Sigmoid colon (tissue), 7 donors: ENCODE measurements at regions of chr6 and their contacts with region 1.

Region 1: GRCh38 chr6:89829591-89830385 is at the start of gene CASP8AP2:
- DNase-seq: peak; percentile 97
- H3K4me3 ChIP-seq: peak within 1 kb of the TSS; percentile 81 to 89 (median 87)
- H3K27ac ChIP-seq: peak within 1 kb of the TSS; percentile 75 to 89 (median 86)
- H3K4me1 ChIP-seq: peaks cover 0 to 22% (median 16%) of the 10 kb centered on the region in 4 donors
- H3K27me3 ChIP-seq: no peaks in the 10 kb centered on the region
- CTCF ChIP-seq: no peak
- EP300 ChIP-seq: no peak
- POLR2A ChIP-seq: peak; percentile 44 to 62
- total RNA-seq, gene CASP8AP2: 16.4 to 25.8 (median 20.7) TPM

Region 2: GRCh38 chr6:88963139-88964090 is 866.4 kb before region 1 on chr6 and contains the start of gene RNGTT:
- intact Hi-C with region 1: loop called (anchors 5 kb)
- DNase-seq: peak; percentile 99
- H3K4me3 ChIP-seq: peak within 1 kb of the TSS; percentile 87 to 93 (median 90)
- H3K27ac ChIP-seq: peak within 1 kb of the TSS; percentile 87 to 89 (median 87)
- H3K4me1 ChIP-seq: peaks cover 0 to 26% (median 21%) of the 10 kb centered on the region in 4 donors
- H3K27me3 ChIP-seq: no peaks in the 10 kb centered on the region
- CTCF ChIP-seq: no peak
- EP300 ChIP-seq: peak in 1 of 4 donors; percentile 70
- POLR2A ChIP-seq: peak in 1 of 2 donors; percentile 40
- total RNA-seq, gene RNGTT: 10.0 to 14.7 (median 12.9) TPM

Region 3: GRCh38 chr6:89432875-89433251 is 396.9 kb before region 1 on chr6 and contains the start of gene ANKRD6:
- intact Hi-C with region 1: loop called (anchors 10 kb)
- DNase-seq: peak; percentile 83
- H3K4me3 ChIP-seq: peak within 1 kb of the TSS; percentile 90 to 99 (median 92)
- H3K27ac ChIP-seq: peak within 1 kb of the TSS in 2 of 4 donors; percentile 49 to 62
- H3K4me1 ChIP-seq: peaks cover 0 to 27% (median 10%) of the 10 kb centered on the region in 4 donors
- H3K27me3 ChIP-seq: no peaks in the 10 kb centered on the region
- CTCF ChIP-seq: peak; percentile 44 to 85 (median 64)
- EP300 ChIP-seq: no peak
- POLR2A ChIP-seq: no peak
- total RNA-seq, gene ANKRD6: 8.0 to 21.6 (median 17.3) TPM

Region 4: DNA sequence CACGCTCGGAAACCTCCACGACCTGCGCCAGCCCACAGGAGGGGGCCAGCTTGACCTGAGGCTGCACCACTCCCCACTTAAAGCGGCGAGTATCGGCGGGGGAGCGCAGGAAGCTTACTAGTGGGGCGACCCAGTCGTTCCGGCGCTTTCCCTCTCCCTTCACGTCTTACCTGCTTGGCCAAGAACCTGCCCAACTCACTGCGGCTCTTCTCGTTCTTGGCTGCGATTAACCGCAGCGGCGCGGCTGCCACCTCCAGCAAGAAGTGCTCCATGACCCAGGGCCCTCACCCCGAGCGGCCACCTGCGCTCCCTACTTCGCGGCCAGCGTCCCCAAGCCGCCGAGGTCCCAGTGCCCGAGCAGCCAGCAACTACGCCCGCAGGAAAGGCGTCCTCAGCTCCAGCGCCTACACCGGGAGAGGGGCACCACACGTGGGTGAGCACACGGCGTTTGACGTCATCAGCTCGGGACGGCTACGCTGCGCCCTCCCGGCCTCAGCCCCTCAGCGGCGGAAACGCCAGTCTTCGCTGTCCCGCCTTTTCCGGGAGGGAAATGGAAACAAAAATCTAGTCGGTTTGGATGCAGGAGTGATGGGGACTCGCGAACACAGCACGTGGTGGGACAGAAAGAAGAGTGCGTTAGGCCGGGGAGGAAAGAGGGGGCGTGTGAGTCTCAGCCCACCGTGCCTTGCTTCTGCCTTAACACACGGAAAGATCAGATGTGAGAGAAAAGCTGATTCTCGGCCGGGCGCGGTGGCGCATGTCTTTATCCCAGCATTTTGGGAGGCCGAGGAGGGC is 10.3 kb before region 1 on chr6 and contains the start of gene MDN1:
- intact Hi-C with region 1: loop called (anchors 1 kb)
- DNase-seq: peak; percentile 95
- H3K4me3 ChIP-seq: peak within 1 kb of the TSS; percentile 78 to 97 (median 83)
- H3K27ac ChIP-seq: peak within 1 kb of the TSS; percentile 83 to 91 (median 90)
- H3K4me1 ChIP-seq: peaks cover 0 to 22% (median 20%) of the 10 kb centered on the region in 4 donors
- H3K27me3 ChIP-seq: no peaks in the 10 kb centered on the region
- CTCF ChIP-seq: no peak
- EP300 ChIP-seq: peak in 1 of 4 donors; percentile 78
- POLR2A ChIP-seq: peak in 1 of 2 donors; percentile 49
- total RNA-seq, gene MDN1: 13.2 to 29.9 (median 17.5) TPM

Region 5: GRCh38 chr6:90184334-90185298 is 354.8 kb after region 1 on chr6:
- intact Hi-C with region 1: no loop called
- DNase-seq: no peak
- H3K4me3 ChIP-seq: no peak overlapping the region
- H3K27ac ChIP-seq: no peak overlapping the region
- H3K4me1 ChIP-seq: peaks cover 0 to 22% (median 7%) of the 10 kb centered on the region in 4 donors
- H3K27me3 ChIP-seq: no peaks in the 10 kb centered on the region
- CTCF ChIP-seq: no peak
- EP300 ChIP-seq: no peak
- POLR2A ChIP-seq: no peak

Region 6: GRCh38 chr6:90586836-90587638 is 757.2 kb after region 1 on chr6 and contains the start of gene MAP3K7:
- intact Hi-C with region 1: loop called (anchors 10 kb)
- DNase-seq: peak; percentile 95
- H3K4me3 ChIP-seq: peak within 1 kb of the TSS; percentile 85 to 100 (median 92)
- H3K27ac ChIP-seq: peak within 1 kb of the TSS; percentile 88 to 92 (median 89)
- H3K4me1 ChIP-seq: peaks cover 0 to 39% (median 22%) of the 10 kb centered on the region in 4 donors
- H3K27me3 ChIP-seq: no peaks in the 10 kb centered on the region
- CTCF ChIP-seq: no peak
- EP300 ChIP-seq: no peak
- POLR2A ChIP-seq: peak; percentile 63 to 66
- total RNA-seq, gene MAP3K7: 21.2 to 25.3 (median 23.5) TPM